GM12878 (cell line): ENCODE measurements at regions of chr6 and their contacts with region 1.

Region 1: GRCh38 chr6:149112976-149113375 is 204.5 kb upstream of the TAB2 start:
- DNase-seq: no peak
- ATAC-seq: peak; percentile 82
- H3K4me3 ChIP-seq: no peak overlapping the region
- H3K27ac ChIP-seq: peak overlapping the region; percentile 74
- H3K4me1 ChIP-seq: peaks cover 50% of the 10 kb centered on the region
- H3K27me3 ChIP-seq: no peaks in the 10 kb centered on the region
- CTCF ChIP-seq: no peak
- EP300 ChIP-seq: no peak
- POLR2A ChIP-seq: no peak
- RAD21 ChIP-seq: no peak

Region 2: GRCh38 chr6:149043476-149044130 is 69.4 kb before region 1 on chr6:
- CTCF ChIA-PET with region 1: interaction called, 6 read pairs
- POLR2A ChIA-PET with region 1: interaction called, 4 read pairs
- RAD21 ChIA-PET with region 1: interaction called, 19 read pairs
- SMC1A ChIA-PET with region 1: interaction called, 28 read pairs
- in situ Hi-C with region 1: no loop called
- intact Hi-C with region 1: no loop called
- DNase-seq: no peak
- ATAC-seq: peak; percentile 43
- H3K4me3 ChIP-seq: no peak overlapping the region
- H3K27ac ChIP-seq: no peak overlapping the region
- H3K4me1 ChIP-seq: peaks cover 46% of the 10 kb centered on the region
- H3K27me3 ChIP-seq: no peaks in the 10 kb centered on the region
- CTCF ChIP-seq: peak; percentile 45 to 62 (median 45)
- EP300 ChIP-seq: no peak
- POLR2A ChIP-seq: no peak
- RAD21 ChIP-seq: peak; percentile 53; the same call in 1 of the 2 replicates

Region 3: GRCh38 chr6:149065658-149066556 is 47.1 kb before region 1 on chr6:
- CTCF ChIA-PET with region 1: interaction called, 7 read pairs
- POLR2A ChIA-PET with region 1: interaction called, 3 read pairs
- RAD21 ChIA-PET with region 1: interaction called, 35 read pairs
- SMC1A ChIA-PET with region 1: interaction called, 15 read pairs
- in situ Hi-C with region 1: no loop called
- intact Hi-C with region 1: no loop called
- DNase-seq: peak; percentile 99
- ATAC-seq: peak; percentile 95
- H3K4me3 ChIP-seq: no peak overlapping the region; the same call in 1 of the 2 replicates
- H3K27ac ChIP-seq: peak overlapping the region; percentile 95
- H3K4me1 ChIP-seq: peaks cover 42% of the 10 kb centered on the region
- H3K27me3 ChIP-seq: no peaks in the 10 kb centered on the region
- CTCF ChIP-seq: no peak
- EP300 ChIP-seq: peak; percentile 91 to 97; a peak in 3 of 4 replicates
- POLR2A ChIP-seq: peak; percentile 76
- RAD21 ChIP-seq: no peak; the same call in 1 of the 2 replicates

Region 4: DNA sequence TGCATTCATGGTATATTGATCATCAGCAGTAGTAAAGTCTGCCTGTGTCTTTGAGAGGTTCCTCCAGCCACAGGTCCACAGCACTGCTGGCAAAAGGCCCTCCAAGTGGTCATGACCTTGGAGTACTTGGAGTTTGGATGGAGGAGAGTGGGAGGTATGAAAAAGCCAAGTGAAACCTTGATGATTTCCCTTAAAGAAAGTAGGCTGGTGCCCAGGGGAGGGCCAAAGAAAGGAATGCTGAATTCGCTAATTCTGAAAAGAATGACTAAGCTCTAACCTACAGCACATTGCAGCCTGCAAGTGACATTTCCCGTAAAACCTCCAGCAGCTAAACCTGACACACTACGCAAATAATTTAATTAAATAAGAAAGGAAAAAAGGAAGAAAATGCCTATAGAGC is 18.8 kb before region 1 on chr6:
- CTCF ChIA-PET with region 1: interaction called, 6 read pairs
- POLR2A ChIA-PET with region 1: interaction called, 3 read pairs
- RAD21 ChIA-PET with region 1: interaction called, 3 read pairs
- SMC1A ChIA-PET with region 1: interaction called, 30 read pairs
- in situ Hi-C with region 1: no loop called
- intact Hi-C with region 1: no loop called
- DNase-seq: no peak
- ATAC-seq: no peak
- H3K4me3 ChIP-seq: no peak overlapping the region
- H3K27ac ChIP-seq: no peak overlapping the region
- H3K4me1 ChIP-seq: peaks cover 4% of the 10 kb centered on the region; the same call in 1 of the 2 replicates
- H3K27me3 ChIP-seq: no peaks in the 10 kb centered on the region
- CTCF ChIP-seq: no peak
- EP300 ChIP-seq: no peak
- POLR2A ChIP-seq: no peak
- RAD21 ChIP-seq: no peak

Region 5: GRCh38 chr6:149140137-149140909 is 27.3 kb after region 1 on chr6:
- CTCF ChIA-PET with region 1: interaction called, 4 read pairs
- POLR2A ChIA-PET with region 1: interaction called, 7 read pairs
- RAD21 ChIA-PET with region 1: interaction called, 14 read pairs
- SMC1A ChIA-PET with region 1: interaction called, 12 read pairs
- in situ Hi-C with region 1: no loop called
- intact Hi-C with region 1: loop called (anchors 2 kb)
- DNase-seq: peak; percentile 65
- ATAC-seq: peak; percentile 94
- H3K4me3 ChIP-seq: peak overlapping the region; percentile 17; the same call in 1 of the 2 replicates
- H3K27ac ChIP-seq: peak overlapping the region; percentile 98
- H3K4me1 ChIP-seq: peaks cover 25% of the 10 kb centered on the region
- H3K27me3 ChIP-seq: no peaks in the 10 kb centered on the region
- CTCF ChIP-seq: no peak
- EP300 ChIP-seq: peak; percentile 80 to 84; a peak in 3 of 4 replicates
- POLR2A ChIP-seq: peak; percentile 72
- RAD21 ChIP-seq: peak; percentile 16; the same call in 1 of the 2 replicates